Mucosa of descending colon (tissue), 3 donors: ENCODE measurements at regions of chr18 and their contacts with region 1.

Region 1: GRCh38 chr18:9971313-9971920 is 57.6 kb downstream of the VAPA start:
- DNase-seq: peak in 1 of 3 donors; percentile 93
- ATAC-seq: peak; percentile 88
- H3K4me3 ChIP-seq: no peak overlapping the region
- H3K4me1 ChIP-seq: no peaks in the 10 kb centered on the region
- CTCF ChIP-seq: peak; percentile 43

Region 2: GRCh38 chr18:10519999-10520935 is 548.9 kb after region 1 on chr18:
- intact Hi-C with region 1: loop called (anchors 1 to 10 kb)
- DNase-seq: peak; percentile 75 to 89 (median 76)
- ATAC-seq: peak; percentile 89
- H3K4me3 ChIP-seq: no peak overlapping the region
- H3K4me1 ChIP-seq: no peaks in the 10 kb centered on the region
- CTCF ChIP-seq: no peak